ENCODE measurements at regions of chr6 and their contacts with region 1.

Region 1: DNA sequence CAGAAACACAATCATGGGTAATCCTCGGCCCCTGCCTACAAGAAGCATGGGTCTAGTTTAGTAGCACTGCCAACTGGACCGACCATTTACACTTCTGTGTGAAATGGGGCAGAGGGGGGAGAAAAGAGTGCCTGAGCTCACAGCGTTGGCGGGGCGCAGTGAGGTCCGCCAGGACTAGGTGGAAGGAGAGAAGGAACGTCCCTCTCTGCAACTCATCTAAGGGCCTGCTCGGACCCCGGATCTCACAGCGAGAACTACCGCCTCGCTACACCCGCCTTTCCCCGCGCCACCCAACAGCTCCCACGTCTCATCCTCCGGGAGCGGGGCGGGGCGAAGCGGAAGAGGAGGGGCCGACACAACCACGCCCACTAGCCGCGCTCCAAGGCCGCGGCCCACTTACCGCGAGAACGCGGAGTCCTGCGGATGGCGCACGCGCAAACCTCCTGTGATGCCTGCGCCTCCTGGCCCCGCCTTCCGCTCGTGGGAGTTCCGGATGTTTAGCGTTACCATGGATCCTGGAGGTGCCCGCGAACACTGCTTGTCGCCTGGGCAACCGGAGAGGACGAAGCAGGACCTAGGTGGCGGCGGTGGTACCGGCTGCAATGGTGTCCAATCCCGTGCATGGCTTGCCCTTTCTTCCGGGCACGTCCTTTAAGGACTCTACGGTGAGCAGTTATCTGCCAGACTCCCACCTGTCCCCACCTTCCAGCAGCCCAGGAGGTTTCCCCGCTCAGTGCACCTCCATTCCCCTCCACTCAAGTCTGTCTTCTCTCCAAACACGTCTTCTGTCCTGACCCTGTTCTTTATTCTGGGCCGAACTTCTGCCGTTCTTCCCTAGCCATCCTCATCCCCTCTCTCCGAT is at the start of gene EFHC1:
- DNase-seq: peak; percentile 98 to 100 (median 99)
- H3K4me3 ChIP-seq: peak within 1 kb of the TSS; percentile 68
- H3K27ac ChIP-seq: peak within 1 kb of the TSS; percentile 40 to 72
- H3K4me1 ChIP-seq: peaks cover 5% of the 10 kb centered on the region
- H3K27me3 ChIP-seq: no peaks in the 10 kb centered on the region
- CTCF ChIP-seq: no peak
- EP300 ChIP-seq: no peak
- POLR2A ChIP-seq: peak; percentile 79
- total RNA-seq, gene EFHC1: 17.6 to 59.5 (median 23.5) TPM

Region 2: GRCh38 chr6:52284460-52285176 is 135.4 kb before region 1 on chr6 and contains the start of gene MCM3:
- intact Hi-C with region 1: loop called in 1 of 4 experiments (anchors 10 kb)
- DNase-seq: peak; percentile 94 to 98 (median 96)
- H3K4me3 ChIP-seq: peak within 1 kb of the TSS; percentile 80
- H3K27ac ChIP-seq: peak within 1 kb of the TSS in 1 of 2 donors; percentile 39
- H3K4me1 ChIP-seq: no peaks in the 10 kb centered on the region
- H3K27me3 ChIP-seq: no peaks in the 10 kb centered on the region
- CTCF ChIP-seq: peak in 2 of 3 donors; percentile 10 to 16
- EP300 ChIP-seq: no peak
- POLR2A ChIP-seq: no peak
- total RNA-seq, gene MCM3: 25.5 to 41.8 (median 37.1) TPM

Region 3: DNA sequence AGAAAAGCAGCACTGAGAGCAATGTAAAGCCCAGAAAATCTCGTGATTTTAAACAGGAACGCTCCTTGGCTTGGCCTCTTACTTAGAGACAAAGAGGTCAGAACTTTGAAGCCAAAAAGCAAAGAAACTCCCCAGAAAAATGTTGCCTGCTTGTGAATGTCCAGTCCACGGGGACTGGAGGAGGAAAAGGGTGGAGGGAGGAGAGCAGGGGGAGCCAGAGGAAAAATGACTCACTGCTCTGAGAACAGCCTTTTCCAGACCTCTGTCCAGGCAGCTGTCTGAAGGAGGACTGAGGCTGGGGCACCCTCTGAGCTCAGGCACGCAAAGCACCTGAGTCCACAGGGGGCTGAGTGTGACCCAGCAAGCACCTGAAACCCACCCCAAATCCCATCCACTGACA is 92.2 kb after region 1 on chr6:
- intact Hi-C with region 1: loop called in 3 of 4 experiments (anchors 5 to 10 kb)
- DNase-seq: peak; percentile 59 to 74 (median 70)
- H3K4me3 ChIP-seq: no peak overlapping the region
- H3K27ac ChIP-seq: peak overlapping the region; percentile 57 to 75
- H3K4me1 ChIP-seq: peaks cover 21% of the 10 kb centered on the region
- H3K27me3 ChIP-seq: no peaks in the 10 kb centered on the region
- CTCF ChIP-seq: no peak
- EP300 ChIP-seq: no peak
- POLR2A ChIP-seq: no peak

Region 4: DNA sequence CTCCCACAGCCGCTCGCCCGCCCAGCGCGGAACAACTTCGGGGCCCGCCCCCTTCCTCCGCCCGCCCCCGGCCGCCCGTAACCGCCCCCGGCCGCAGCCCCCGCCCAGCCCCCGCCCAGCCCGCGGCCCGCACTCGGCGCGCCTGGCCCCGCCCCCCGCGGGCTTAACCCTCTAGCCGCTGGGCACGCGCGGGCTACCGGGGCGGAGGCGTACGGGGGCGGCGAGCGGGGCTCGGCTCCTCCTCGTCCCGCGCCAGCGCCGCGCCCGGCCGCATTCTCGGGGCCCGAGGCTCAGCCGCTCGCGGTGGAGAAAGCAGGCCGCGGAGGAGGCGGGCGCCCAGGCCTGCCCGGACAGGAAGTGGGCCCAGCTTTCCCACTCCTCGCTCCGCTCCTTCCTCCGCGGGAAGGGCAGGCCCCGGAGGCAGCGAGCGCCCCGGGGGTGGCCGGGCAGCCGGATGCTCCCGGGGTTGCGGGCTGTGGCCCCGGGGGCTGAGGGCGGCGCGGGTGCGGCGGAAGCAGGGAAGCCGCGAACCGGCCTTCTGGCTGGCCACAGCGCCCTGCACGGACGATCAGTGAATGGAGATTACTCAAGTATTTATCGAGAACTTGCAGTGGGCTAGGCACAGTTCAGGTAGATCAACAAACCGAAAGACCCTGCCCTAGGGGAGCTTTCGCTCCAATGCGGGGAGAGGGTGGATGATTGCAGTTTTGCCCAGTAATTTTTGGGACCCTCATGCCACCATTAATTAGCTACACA is 157.2 kb after region 1 on chr6 and contains the start of gene TRAM2:
- intact Hi-C with region 1: loop called in 3 of 4 experiments (anchors 5 to 10 kb)
- DNase-seq: peak; percentile 85 to 92 (median 89)
- H3K4me3 ChIP-seq: peak within 1 kb of the TSS; percentile 80
- H3K27ac ChIP-seq: peak within 1 kb of the TSS; percentile 97 to 99
- H3K4me1 ChIP-seq: peaks cover 11% of the 10 kb centered on the region
- H3K27me3 ChIP-seq: no peaks in the 10 kb centered on the region
- CTCF ChIP-seq: peak in 1 of 3 donors; percentile 17
- EP300 ChIP-seq: no peak
- POLR2A ChIP-seq: peak; percentile 31
- total RNA-seq, gene TRAM2: 7.7 to 31.0 (median 22.0) TPM

Region 5: DNA sequence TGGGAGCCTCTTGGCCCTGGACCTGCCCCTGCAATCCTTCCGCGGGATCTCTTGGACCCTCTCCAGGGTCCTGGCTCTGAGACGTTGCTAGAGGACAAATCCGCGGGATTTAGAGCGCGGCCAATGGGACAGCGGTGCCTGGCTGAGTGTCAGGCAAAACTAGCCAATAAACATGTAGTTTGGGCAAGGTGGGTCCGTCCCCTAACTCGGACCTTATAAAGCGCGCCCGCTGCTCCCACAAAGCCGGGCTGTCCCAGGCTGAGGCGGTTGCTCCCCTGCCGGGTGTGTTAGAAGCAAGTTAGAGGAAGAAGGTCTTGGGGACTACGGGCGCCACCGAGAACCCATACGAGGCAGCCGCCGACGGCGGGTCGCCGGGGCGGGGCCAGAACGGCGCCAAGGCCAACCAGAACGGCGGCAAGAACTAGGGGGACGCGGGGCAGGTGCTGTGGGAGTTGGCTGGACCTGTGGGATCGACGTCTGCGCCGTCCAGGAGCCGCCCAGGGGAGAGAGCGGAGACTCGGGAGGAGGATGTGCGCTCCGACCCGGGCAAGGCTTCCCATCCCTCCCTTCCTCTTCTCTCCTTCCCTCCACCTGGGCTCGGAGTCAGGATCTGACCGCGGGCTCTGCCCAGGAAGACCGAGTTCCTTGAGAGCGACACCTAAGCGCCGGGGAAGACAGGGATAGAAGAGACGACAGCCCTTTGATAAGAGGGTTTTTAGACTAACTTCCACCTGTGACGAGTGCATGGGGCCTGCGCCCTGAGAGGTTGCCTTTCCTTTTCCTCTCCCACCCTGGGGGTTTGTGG is 244.3 kb after region 1 on chr6:
- intact Hi-C with region 1: loop called (anchors 2 to 5 kb)
- DNase-seq: peak; percentile 80 to 90 (median 87)
- H3K4me3 ChIP-seq: peak overlapping the region; percentile 77
- H3K27ac ChIP-seq: no peak overlapping the region
- H3K4me1 ChIP-seq: no peaks in the 10 kb centered on the region
- H3K27me3 ChIP-seq: no peaks in the 10 kb centered on the region
- CTCF ChIP-seq: no peak
- EP300 ChIP-seq: no peak
- POLR2A ChIP-seq: peak; percentile 34

Measured in ovary (tissue), 10 donors.